ENCODE measurements at regions of chr6 and their contacts with region 1.

Region 1: GRCh38 chr6:134174672-134175198 is 122.3 kb upstream of the SLC2A12 start:
- DNase-seq: peak; percentile 84 to 89
- ATAC-seq: peak; percentile 41 to 48
- H3K4me3 ChIP-seq: peak overlapping the region; percentile 71 to 94 (median 86)
- H3K27ac ChIP-seq: peak overlapping the region; percentile 92 to 98 (median 96)
- H3K4me1 ChIP-seq: peaks cover 38 to 52% of the 10 kb centered on the region in 2 donors
- H3K27me3 ChIP-seq: no peaks in the 10 kb centered on the region
- CTCF ChIP-seq: peak in 1 of 5 experiments; percentile 5
- POLR2A ChIP-seq: peak; percentile 98 to 99

Region 2: DNA sequence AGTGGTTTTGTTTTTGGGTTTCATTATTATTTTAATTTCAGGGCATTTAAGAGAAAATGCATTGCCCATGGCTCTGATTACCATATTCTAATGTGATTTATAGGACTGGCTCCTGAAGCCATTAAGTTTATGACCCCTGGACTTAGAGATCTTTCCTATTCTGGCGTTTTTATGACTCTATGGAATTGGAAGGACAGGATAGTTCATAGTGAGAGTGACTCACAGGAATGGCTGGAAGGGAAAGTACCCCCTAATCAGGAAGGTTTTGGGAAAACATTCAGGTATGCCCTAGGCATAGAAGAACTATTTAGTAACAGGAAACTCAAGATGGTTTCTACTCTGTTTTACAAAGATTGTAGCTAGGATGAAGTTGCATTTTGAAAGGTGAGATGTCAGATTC is 13.7 kb before region 1 on chr6:
- in situ Hi-C with region 1: no loop called
- intact Hi-C with region 1: loop called (anchors 2 kb)
- DNase-seq: no peak
- ATAC-seq: no peak
- H3K4me3 ChIP-seq: no peak overlapping the region
- H3K27ac ChIP-seq: no peak overlapping the region
- H3K4me1 ChIP-seq: peaks cover 0 to 8% of the 10 kb centered on the region in 2 donors
- H3K27me3 ChIP-seq: no peaks in the 10 kb centered on the region
- CTCF ChIP-seq: no peak
- POLR2A ChIP-seq: no peak

Region 3: GRCh38 chr6:134402372-134402984 is 227.7 kb after region 1 on chr6:
- in situ Hi-C with region 1: no loop called
- intact Hi-C with region 1: loop called (anchors 5 kb)
- DNase-seq: no peak
- ATAC-seq: no peak
- H3K4me3 ChIP-seq: no peak overlapping the region
- H3K27ac ChIP-seq: peak overlapping the region in 2 of 4 donors; percentile 36 to 59
- H3K4me1 ChIP-seq: peaks cover 11 to 22% of the 10 kb centered on the region in 2 donors
- H3K27me3 ChIP-seq: no peaks in the 10 kb centered on the region
- CTCF ChIP-seq: no peak
- POLR2A ChIP-seq: no peak

Region 4: GRCh38 chr6:134529921-134530320 is 355.2 kb after region 1 on chr6:
- in situ Hi-C with region 1: no loop called
- intact Hi-C with region 1: loop called (anchors 5 kb)
- DNase-seq: no peak
- ATAC-seq: no peak
- H3K4me3 ChIP-seq: no peak overlapping the region
- H3K27ac ChIP-seq: no peak overlapping the region
- H3K4me1 ChIP-seq: peaks cover 13 to 24% of the 10 kb centered on the region in 2 donors
- H3K27me3 ChIP-seq: no peaks in the 10 kb centered on the region
- CTCF ChIP-seq: no peak
- POLR2A ChIP-seq: no peak

Region 5: GRCh38 chr6:134797400-134798113 is 622.8 kb after region 1 on chr6:
- in situ Hi-C with region 1: no loop called
- intact Hi-C with region 1: loop called (anchors 1 kb)
- DNase-seq: peak; percentile 73 to 76
- ATAC-seq: peak; percentile 100
- H3K4me3 ChIP-seq: no peak overlapping the region
- H3K27ac ChIP-seq: peak overlapping the region; percentile 57 to 79 (median 76)
- H3K4me1 ChIP-seq: peaks cover 17 to 22% of the 10 kb centered on the region in 2 donors
- H3K27me3 ChIP-seq: no peaks in the 10 kb centered on the region
- CTCF ChIP-seq: no peak
- POLR2A ChIP-seq: no peak

Region 6: DNA sequence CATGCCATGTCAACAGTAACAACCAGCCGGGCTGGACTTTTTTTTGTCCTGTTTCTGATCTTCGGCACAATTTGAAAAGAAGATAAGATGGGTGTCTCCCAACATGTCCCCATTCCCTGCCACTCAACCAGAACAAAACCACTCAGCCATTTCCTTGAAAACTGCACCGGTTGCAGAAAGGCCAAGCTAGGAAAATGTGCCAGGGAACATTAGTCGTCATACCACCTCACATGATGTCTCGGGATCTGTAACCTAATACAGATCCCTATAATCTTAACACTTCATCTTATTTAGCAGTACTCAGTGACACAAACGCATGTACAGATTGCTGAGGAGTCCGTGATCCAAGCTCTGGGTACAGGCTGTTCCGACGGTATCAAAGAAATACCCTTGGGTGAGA is 728.7 kb after region 1 on chr6:
- in situ Hi-C with region 1: loop called in 1 of 4 experiments (anchors 25 kb)
- intact Hi-C with region 1: loop called (anchors 2 kb)
- DNase-seq: peak; percentile 58 to 67
- ATAC-seq: peak; percentile 93 to 96
- H3K4me3 ChIP-seq: no peak overlapping the region
- H3K27ac ChIP-seq: peak overlapping the region; percentile 70 to 90 (median 78)
- H3K4me1 ChIP-seq: peaks cover 13 to 23% of the 10 kb centered on the region in 2 donors
- H3K27me3 ChIP-seq: no peaks in the 10 kb centered on the region
- CTCF ChIP-seq: no peak
- POLR2A ChIP-seq: no peak

Measured in gastrocnemius medialis (tissue), 4 donors.